Tibial artery (tissue), 4 donors: ENCODE measurements at regions of chr3 and their contacts with region 1.

Region 1: GRCh38 chr3:72847751-72848702 is at the start of gene SHQ1:
- DNase-seq: peak; percentile 97
- H3K4me3 ChIP-seq: peak within 1 kb of the TSS; percentile 65 to 99
- H3K27ac ChIP-seq: peak within 1 kb of the TSS; percentile 65 to 77
- H3K4me1 ChIP-seq: peaks cover 0 to 25% (median 21%) of the 10 kb centered on the region in 4 donors
- H3K27me3 ChIP-seq: no peaks in the 10 kb centered on the region
- CTCF ChIP-seq: peak in 1 of 2 experiments; percentile 5

Region 2: DNA sequence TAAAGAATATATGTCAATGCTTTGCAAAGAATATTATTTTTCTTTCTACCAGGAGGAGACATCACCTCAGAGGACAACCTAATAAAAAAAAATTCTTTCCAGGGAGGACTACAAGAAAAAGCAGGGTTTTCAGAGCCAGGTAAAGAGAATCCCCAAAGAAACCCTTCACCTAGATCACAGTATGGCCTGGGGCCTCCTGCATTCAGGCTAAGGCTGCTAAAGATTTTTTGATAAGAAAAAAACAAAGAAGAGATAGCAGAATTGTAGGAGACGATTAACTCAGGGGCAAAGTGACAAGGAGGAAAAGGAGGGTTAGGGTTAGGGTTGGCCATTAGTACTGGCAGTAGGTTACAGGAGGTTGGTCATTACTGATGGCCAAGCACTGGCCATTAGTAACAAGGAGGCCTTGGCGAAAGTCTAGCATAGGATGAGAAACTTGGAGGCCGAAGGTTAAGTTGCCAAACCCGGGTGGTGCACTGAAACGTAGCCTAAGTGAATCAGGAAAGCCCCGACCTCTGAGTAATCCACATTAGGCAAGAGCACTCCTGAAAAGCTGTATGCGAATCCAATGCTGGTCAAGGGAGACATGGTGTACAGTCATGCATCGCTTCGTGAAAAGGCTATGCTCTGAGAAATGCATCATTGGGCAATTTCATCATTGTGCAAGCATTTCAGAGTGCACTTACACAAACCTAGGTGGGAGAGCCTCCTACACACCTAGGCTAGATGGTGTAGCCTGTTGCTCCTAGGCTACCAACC is 222.6 kb before region 1 on chr3:
- intact Hi-C with region 1: no loop called
- DNase-seq: no peak
- H3K4me3 ChIP-seq: no peak overlapping the region
- H3K27ac ChIP-seq: no peak overlapping the region
- H3K4me1 ChIP-seq: no peaks in the 10 kb centered on the region
- H3K27me3 ChIP-seq: no peaks in the 10 kb centered on the region
- CTCF ChIP-seq: no peak

Region 3: DNA sequence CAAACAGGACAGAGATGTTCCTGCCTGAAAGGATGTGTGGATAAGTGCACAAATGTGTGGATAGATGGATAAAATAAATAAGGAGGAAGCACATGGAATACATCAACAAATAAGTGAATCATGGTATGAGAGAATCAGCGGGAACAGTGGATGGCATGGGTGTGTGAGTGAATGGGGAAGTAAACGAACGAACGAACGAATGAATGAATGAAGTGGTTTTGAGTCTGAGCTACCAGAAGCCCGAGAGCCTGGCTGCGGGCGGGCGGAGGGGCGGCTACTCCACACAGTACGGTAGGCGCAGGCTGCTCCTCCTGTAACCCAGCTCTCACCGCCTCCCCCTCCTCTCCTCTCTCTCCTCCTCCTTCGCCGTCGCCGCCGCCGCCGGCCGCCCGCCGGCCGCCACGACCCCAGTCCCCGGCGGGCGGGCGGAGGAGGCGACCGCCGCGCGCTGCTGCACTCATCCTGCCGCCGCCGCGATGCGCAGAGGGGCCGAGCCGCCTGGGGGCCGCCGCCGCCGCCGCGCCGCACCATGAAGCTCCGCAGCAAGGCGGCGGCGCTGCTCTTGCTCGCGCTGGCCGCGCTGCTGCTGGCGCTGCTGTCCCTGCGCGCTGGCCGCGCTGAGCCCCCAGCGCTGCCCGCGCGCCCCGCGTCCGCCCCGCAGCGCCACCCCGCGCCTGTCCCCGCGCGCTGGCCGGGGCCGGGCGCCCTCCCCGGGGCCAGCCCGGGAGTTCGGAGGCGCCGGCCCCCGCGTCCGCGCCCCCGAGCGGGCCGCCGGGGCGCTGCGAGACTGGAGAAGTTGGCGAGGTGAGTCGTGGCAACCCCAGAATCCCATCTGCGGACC is 39.9 kb after region 1 on chr3 and contains the start of gene GXYLT2:
- intact Hi-C with region 1: loop called (anchors 5 kb)
- DNase-seq: peak; percentile 53 to 80
- H3K4me3 ChIP-seq: peak within 1 kb of the TSS; percentile 56 to 61
- H3K27ac ChIP-seq: peak within 1 kb of the TSS; percentile 74 to 78
- H3K4me1 ChIP-seq: peaks cover 0 to 56% (median 9%) of the 10 kb centered on the region in 4 donors
- H3K27me3 ChIP-seq: no peaks in the 10 kb centered on the region
- CTCF ChIP-seq: peak in 1 of 2 experiments; percentile 34

Region 4: GRCh38 chr3:73056014-73056844 is 208.2 kb after region 1 on chr3:
- intact Hi-C with region 1: loop called (anchors 10 kb)
- DNase-seq: no peak
- H3K4me3 ChIP-seq: no peak overlapping the region
- H3K27ac ChIP-seq: no peak overlapping the region
- H3K4me1 ChIP-seq: peaks cover 0 to 8% (median 2%) of the 10 kb centered on the region in 4 donors
- H3K27me3 ChIP-seq: no peaks in the 10 kb centered on the region
- CTCF ChIP-seq: peak; percentile 56 to 68